Activated B cell treated with CpG ODN at 0.5 μM for 24 hours (primary cell): ENCODE measurements at regions of chr15 and their contacts with region 1.

Region 1: DNA sequence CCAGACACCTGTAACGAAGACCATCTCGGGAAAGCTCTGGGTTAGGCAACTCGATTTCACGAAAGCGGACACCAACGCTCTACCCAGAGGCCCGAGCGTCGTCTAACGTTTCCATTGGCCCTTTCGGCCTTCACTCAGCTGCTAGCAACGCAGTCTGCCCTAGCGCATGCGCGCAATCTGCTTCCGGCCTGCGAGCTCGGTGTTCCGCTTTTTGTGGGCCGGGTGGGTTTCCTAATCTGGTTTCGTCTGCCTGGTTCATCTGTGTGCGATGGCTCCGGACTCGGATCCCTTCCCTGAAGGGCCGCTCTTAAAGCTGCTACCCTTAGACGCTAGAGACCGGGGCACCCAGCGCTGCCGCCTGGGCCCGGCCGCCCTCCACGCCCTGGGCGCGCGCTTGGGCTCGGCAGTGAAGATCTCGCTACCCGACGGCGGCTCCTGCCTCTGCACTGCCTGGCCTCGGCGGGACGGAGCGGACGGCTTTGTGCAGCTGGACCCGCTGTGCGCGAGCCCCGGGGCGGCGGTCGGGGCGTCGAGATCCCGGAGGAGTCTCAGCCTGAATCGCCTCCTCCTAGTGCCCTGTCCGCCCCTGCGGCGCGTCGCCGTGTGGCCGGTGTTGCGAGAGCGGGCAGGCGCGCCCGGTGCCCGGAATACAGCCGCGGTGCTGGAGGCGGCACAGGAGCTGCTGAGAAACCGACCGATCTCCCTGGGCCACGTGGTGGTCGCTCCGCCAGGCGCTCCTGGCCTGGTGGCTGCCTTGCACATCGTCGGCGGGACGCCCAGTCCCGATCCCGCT is 24.0 kb upstream of the GATM start:
- DNase-seq: peak; percentile 90
- ATAC-seq: peak; percentile 92
- H3K4me3 Mint-ChIP-seq: peak overlapping the region; percentile 95
- H3K27ac Mint-ChIP-seq: peak overlapping the region; percentile 91
- H3K4me1 Mint-ChIP-seq: peaks cover 33% of the 10 kb centered on the region
- H3K27me3 Mint-ChIP-seq: no peaks in the 10 kb centered on the region
- CTCF ChIP-seq: no peak

Region 2: GRCh38 chr15:45022871-45023658 is 379.3 kb before region 1 on chr15 and contains the start of gene SORD:
- CTCF ChIA-PET with region 1: no interaction called
- POLR2A ChIA-PET with region 1: no interaction called
- intact Hi-C with region 1: loop called (anchors 10 kb)
- DNase-seq: peak; percentile 91
- ATAC-seq: peak; percentile 100
- H3K4me3 Mint-ChIP-seq: peak within 1 kb of the TSS; percentile 89
- H3K27ac Mint-ChIP-seq: no peak within 1 kb of the TSS
- H3K4me1 Mint-ChIP-seq: peaks cover 27% of the 10 kb centered on the region
- H3K27me3 Mint-ChIP-seq: peaks cover 15% of the 10 kb centered on the region
- CTCF ChIP-seq: no peak
- total RNA-seq, gene SORD: 15.1 and 15.5 TPM in 2 replicates

Region 3: DNA sequence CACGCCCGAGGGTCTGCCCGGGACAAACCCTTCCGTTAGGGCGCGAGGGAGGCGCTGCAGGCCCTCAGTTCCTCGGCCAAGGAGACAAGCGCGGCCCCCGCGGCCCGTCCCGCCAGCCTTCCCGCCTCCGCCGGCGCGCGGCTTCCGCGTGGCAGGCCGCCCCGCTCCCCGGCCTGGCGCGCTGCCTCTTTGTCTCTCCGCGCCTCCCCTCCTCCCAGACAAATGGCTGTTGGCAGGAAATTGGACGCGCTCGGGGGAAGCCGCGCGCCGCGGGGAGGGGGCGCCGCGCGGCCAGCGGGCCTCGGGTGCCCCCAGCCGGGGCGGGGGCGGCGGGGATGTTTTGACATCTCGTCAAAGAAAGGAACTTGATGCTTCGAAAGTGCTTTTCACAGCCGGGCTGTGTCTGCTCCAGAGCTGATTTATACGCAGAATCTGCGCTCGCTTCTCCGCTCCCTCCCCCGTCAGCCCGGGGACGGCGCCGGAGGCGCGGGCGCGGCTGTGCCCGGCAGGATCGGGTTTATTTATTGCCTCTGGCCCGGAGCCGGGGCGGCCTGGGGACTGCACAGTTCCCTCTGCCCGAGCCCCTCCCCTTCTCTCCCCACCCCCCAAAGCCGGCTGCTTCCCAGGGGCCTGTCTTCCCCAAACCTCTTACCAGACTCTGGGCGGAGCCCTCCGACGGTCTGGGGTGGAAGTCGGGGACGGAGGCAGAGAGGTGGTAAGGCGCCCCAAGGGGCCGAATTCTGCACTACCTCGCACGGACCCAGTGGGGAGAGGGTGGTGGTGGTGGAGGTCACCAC is 235.3 kb before region 1 on chr15:
- CTCF ChIA-PET with region 1: interaction called, 65 read pairs
- POLR2A ChIA-PET with region 1: interaction called, 14 read pairs
- intact Hi-C with region 1: loop called (anchors 1 kb)
- DNase-seq: peak; percentile 75
- ATAC-seq: peak; percentile 95
- H3K4me3 Mint-ChIP-seq: peak overlapping the region; percentile 81
- H3K27ac Mint-ChIP-seq: peak overlapping the region; percentile 80
- H3K4me1 Mint-ChIP-seq: peaks cover 32% of the 10 kb centered on the region
- H3K27me3 Mint-ChIP-seq: no peaks in the 10 kb centered on the region
- CTCF ChIP-seq: no peak

Region 4: DNA sequence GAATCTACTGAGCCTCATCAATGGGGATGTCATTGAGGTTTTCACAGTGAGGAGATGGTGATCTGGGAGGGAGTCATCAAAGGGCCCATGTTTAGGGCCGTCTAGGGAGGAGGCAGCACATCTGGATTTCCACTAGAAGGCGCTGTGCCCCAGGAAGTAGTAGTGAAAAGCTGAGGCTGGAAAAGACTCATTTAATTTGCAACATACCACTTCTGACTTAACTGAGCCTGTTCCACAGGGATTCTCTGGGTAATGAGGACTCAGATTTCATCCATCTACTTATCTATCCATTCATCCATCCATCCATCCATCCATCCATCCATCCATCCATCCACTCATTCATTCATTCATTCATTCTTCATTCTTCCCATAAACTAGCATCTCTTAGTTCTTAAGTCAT is 197.2 kb before region 1 on chr15:
- CTCF ChIA-PET with region 1: interaction called, 15 read pairs
- POLR2A ChIA-PET with region 1: interaction called, 53 read pairs
- intact Hi-C with region 1: no loop called
- DNase-seq: no peak
- ATAC-seq: no peak
- H3K4me3 Mint-ChIP-seq: no peak overlapping the region
- H3K27ac Mint-ChIP-seq: no peak overlapping the region
- H3K4me1 Mint-ChIP-seq: peaks cover 1% of the 10 kb centered on the region
- H3K27me3 Mint-ChIP-seq: peaks cover 23% of the 10 kb centered on the region
- CTCF ChIP-seq: no peak

Region 5: DNA sequence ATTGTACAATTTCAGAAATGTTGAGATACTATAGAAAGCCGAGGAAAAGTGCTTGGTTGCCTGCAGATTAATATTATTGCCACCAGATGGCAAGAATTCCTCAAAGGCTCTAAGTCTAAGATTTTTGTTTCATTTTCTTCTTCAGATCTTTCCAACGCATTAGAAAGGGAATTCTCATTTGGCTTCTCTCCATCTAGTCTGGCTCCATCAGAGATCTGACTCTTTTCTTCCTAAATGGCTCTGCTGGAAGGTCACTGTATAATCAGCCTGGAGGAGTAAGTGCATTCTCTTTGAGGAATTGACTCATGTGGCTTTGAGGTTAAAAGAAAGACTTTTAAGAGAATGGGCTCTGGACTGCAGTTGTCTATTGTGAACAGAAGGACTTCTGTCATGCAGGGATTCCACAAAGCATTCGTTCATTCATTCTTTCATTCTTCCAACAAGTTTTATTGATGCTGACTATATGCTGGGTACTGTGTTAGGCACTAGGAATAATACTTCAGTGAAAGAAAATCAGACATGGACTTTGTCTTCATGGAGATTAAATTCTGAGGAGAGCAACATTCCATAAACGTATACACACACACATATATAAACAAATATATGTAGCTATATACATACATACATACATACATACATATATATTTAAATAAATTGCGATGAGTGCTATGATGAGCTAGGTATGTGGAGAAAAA is 95.0 kb before region 1 on chr15:
- CTCF ChIA-PET with region 1: interaction called, 19 read pairs
- POLR2A ChIA-PET with region 1: interaction called, 3 read pairs
- intact Hi-C with region 1: loop called (anchors 1 kb)
- DNase-seq: no peak
- ATAC-seq: no peak
- H3K4me3 Mint-ChIP-seq: peak overlapping the region; percentile 79
- H3K27ac Mint-ChIP-seq: peak overlapping the region; percentile 50
- H3K4me1 Mint-ChIP-seq: peaks cover 4% of the 10 kb centered on the region
- H3K27me3 Mint-ChIP-seq: peaks cover 34% of the 10 kb centered on the region
- CTCF ChIP-seq: no peak

Region 6: GRCh38 chr15:45391746-45392583 is 10.4 kb before region 1 on chr15:
- CTCF ChIA-PET with region 1: interaction called, 8 read pairs
- POLR2A ChIA-PET with region 1: interaction called, 45 read pairs
- intact Hi-C with region 1: loop called (anchors 1 kb)
- DNase-seq: no peak
- ATAC-seq: peak; percentile 93
- H3K4me3 Mint-ChIP-seq: peak overlapping the region; percentile 30
- H3K27ac Mint-ChIP-seq: peak overlapping the region; percentile 80
- H3K4me1 Mint-ChIP-seq: peaks cover 22% of the 10 kb centered on the region
- H3K27me3 Mint-ChIP-seq: no peaks in the 10 kb centered on the region
- CTCF ChIP-seq: no peak

Region 7: DNA sequence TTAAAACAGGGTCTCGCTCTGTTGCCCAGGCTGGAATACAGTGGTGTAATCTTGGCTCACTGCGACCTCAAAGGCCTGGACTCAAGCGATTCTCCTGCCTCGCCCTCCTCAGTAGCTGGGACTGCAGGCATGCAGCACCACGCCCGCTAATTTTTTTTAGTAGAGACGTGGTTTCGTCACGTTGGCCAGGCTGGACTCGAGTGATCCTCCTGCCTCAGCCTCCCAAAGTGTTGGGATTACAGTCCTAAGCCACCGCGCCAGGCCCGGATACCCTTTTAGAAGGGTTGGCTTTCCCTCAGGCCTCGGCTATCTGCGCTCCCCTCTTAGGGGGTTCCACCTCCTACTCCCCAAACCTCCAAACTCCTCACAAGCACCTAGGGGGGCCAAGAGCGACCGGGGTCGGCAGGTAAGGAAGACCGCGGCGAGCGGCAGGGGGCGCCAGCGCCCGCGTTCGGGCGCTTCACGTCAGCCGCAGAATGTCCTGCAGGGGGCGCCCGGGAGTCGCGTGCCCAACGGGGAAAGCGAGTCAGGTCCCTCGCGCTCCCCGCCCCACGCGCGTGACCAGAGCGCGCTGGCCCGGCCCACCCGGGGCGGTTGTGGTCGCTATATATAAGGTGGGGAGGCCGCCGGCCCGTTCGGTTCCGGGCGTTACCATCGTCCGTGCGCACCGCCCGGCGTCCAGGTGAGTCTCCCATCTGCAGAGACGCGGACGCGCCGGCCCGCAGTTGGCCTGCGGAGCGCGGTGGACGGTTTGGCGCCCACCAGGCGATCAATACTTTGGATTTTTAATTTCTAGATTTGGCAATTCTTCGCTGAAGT is 27.8 kb after region 1 on chr15:
- CTCF ChIA-PET with region 1: no interaction called
- POLR2A ChIA-PET with region 1: no interaction called
- intact Hi-C with region 1: no loop called
- DNase-seq: peak; percentile 87
- ATAC-seq: peak; percentile 94
- H3K4me3 Mint-ChIP-seq: peak overlapping the region; percentile 35
- H3K27ac Mint-ChIP-seq: no peak overlapping the region
- H3K4me1 Mint-ChIP-seq: peaks cover 4% of the 10 kb centered on the region
- H3K27me3 Mint-ChIP-seq: peaks cover 2% of the 10 kb centered on the region
- CTCF ChIP-seq: peak; percentile 98

Region 8: GRCh38 chr15:45486317-45486716 is 84.0 kb after region 1 on chr15:
- CTCF ChIA-PET with region 1: no interaction called
- POLR2A ChIA-PET with region 1: no interaction called
- intact Hi-C with region 1: no loop called
- DNase-seq: no peak
- ATAC-seq: no peak
- H3K4me3 Mint-ChIP-seq: no peak overlapping the region
- H3K27ac Mint-ChIP-seq: no peak overlapping the region
- H3K4me1 Mint-ChIP-seq: no peaks in the 10 kb centered on the region
- H3K27me3 Mint-ChIP-seq: no peaks in the 10 kb centered on the region
- CTCF ChIP-seq: no peak